Esophagus muscularis mucosa (tissue), 4 donors: ENCODE measurements at regions of chr1 and their contacts with region 1.

Region 1: DNA sequence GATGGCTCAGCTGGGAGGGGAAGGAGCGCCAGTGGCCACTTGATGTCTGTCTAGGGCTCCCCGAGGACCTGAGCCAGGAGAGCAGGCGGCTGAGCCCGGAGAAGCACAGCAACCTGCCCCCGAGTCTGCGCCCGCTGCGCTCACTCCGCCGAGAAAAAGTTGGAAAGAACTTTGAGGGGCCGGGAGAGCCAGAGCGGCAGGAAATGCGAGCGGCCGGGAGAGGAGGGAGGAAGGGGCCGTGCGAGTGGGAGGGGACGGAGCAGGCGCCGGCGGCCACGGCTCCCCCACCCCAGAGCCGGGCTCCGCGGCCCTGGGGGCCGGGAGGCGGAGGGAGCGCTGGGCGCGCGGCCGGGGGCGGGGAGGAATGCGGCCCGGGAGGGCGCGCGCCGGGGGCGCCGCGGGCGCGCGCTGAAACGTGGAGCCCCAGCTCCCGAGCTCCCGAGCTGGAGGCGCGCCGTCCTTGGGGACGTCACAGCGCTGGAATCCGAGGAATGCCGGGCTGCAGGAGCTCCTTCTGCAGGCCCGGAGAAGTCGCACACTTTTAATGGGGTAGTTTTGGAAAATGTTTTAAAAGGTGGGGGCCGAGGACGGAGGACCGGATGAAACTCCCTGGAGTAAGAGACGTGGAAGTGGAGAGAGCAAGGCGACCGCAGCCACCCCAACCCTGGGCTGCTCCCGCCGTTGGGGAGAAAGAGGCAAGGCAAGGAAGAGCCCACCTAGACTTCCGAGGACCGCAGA is at the start of gene PTPN14:
- DNase-seq: peak; percentile 95
- H3K4me3 ChIP-seq: peak within 1 kb of the TSS; percentile 67 to 91 (median 80)
- H3K27ac ChIP-seq: peak within 1 kb of the TSS; percentile 93 to 99 (median 97)
- H3K4me1 ChIP-seq: peaks cover 23 to 55% (median 45%) of the 10 kb centered on the region in 4 donors
- H3K27me3 ChIP-seq: no peaks in the 10 kb centered on the region
- CTCF ChIP-seq: peak in 2 of 3 experiments; percentile 21 to 56
- EP300 ChIP-seq: no peak
- POLR2A ChIP-seq: peak; percentile 50
- total RNA-seq, gene PTPN14: 48.5 to 108 (median 69.1) TPM

Region 2: DNA sequence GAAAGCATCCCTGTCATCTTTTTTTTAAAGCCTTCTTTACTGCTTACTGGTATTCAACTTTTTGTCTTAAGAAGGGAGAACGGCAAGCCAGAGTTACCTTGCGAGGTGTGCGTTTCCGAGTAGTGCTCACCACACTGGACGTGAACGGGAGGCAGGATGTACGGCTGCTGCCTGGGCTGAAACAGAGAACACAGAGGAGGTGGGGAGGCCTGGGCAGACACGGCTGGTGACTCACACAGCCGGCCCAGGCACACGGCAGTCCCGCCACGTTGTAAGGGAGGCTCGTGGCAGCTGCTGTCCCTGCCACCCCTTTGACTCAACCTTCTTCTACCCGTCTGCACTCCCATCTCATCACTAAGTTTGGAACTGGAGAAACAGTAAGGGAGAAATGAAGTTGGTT is 164.9 kb before region 1 on chr1:
- intact Hi-C with region 1: loop called (anchors 10 kb)
- DNase-seq: no peak
- H3K4me3 ChIP-seq: no peak overlapping the region
- H3K27ac ChIP-seq: peak overlapping the region in 2 of 4 donors; percentile 48 to 52
- H3K4me1 ChIP-seq: no peaks in the 10 kb centered on the region
- H3K27me3 ChIP-seq: no peaks in the 10 kb centered on the region
- CTCF ChIP-seq: no peak
- EP300 ChIP-seq: no peak
- POLR2A ChIP-seq: no peak

Region 3: GRCh38 chr1:214446772-214447556 is 104.6 kb before region 1 on chr1:
- intact Hi-C with region 1: loop called (anchors 5 kb)
- DNase-seq: no peak
- H3K4me3 ChIP-seq: no peak overlapping the region
- H3K27ac ChIP-seq: peak overlapping the region in 3 of 4 donors; percentile 60 to 71 (median 61)
- H3K4me1 ChIP-seq: peaks cover 29 to 39% (median 35%) of the 10 kb centered on the region in 4 donors
- H3K27me3 ChIP-seq: no peaks in the 10 kb centered on the region
- CTCF ChIP-seq: no peak
- EP300 ChIP-seq: no peak
- POLR2A ChIP-seq: no peak

Region 4: DNA sequence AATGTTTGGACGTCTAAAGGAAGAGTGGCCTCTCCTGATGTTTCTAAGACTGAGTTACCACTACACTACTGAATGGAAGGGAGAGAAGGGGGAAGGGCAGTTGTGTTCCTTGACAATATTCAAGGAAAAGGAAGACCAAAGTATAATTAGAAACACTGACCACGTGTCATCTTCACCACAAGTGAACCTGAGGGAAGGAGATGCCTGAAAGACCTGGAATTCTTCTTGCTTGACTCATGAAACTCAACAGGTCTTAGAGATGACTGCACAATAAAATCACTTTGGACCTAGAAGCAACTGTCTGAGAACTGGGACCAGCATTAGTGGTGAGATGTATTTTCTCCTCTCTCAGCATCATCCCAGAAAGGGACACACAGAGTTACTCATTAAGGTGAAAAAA is 56.9 kb before region 1 on chr1:
- intact Hi-C with region 1: loop called (anchors 5 kb)
- DNase-seq: no peak
- H3K4me3 ChIP-seq: no peak overlapping the region
- H3K27ac ChIP-seq: peak overlapping the region in 1 of 4 donors; percentile 21
- H3K4me1 ChIP-seq: peaks cover 30 to 81% (median 66%) of the 10 kb centered on the region in 4 donors
- H3K27me3 ChIP-seq: no peaks in the 10 kb centered on the region
- CTCF ChIP-seq: no peak
- EP300 ChIP-seq: no peak
- POLR2A ChIP-seq: no peak